CD8-positive, alpha-beta T cell (primary cell): ENCODE measurements at regions of chr6 and their contacts with region 1.

Region 1: GRCh38 chr6:90296346-90297114 is at the start of gene BACH2:
- DNase-seq: peak; percentile 87 to 97 (median 96)
- ATAC-seq: peak; percentile 74
- H3K4me3 ChIP-seq: peak within 1 kb of the TSS; percentile 69 to 71
- H3K4me3 Mint-ChIP-seq: peak within 1 kb of the TSS; percentile 94
- H3K27ac ChIP-seq: peak within 1 kb of the TSS; percentile 59 to 88
- H3K27ac Mint-ChIP-seq: peak within 1 kb of the TSS; percentile 94
- H3K4me1 ChIP-seq: peaks cover 27% of the 10 kb centered on the region
- H3K4me1 Mint-ChIP-seq: peaks cover 38% of the 10 kb centered on the region
- H3K27me3 ChIP-seq: no peaks in the 10 kb centered on the region
- H3K27me3 Mint-ChIP-seq: no peaks in the 10 kb centered on the region
- CTCF ChIP-seq: no peak
- total RNA-seq, gene BACH2: 162 to 164 TPM

Region 2: GRCh38 chr6:89829591-89830385 is 466.7 kb before region 1 on chr6 and contains the start of gene CASP8AP2:
- CTCF ChIA-PET with region 1: no interaction called
- POLR2A ChIA-PET with region 1: interaction called, 5 read pairs
- intact Hi-C with region 1: loop called (anchors 1 to 5 kb)
- DNase-seq: peak; percentile 88 to 99 (median 93)
- ATAC-seq: peak; percentile 94
- H3K4me3 ChIP-seq: peak within 1 kb of the TSS; percentile 82 to 95
- H3K4me3 Mint-ChIP-seq: peak within 1 kb of the TSS; percentile 99
- H3K27ac ChIP-seq: peak within 1 kb of the TSS; percentile 71 to 84
- H3K27ac Mint-ChIP-seq: peak within 1 kb of the TSS; percentile 97
- H3K4me1 ChIP-seq: peaks cover 14% of the 10 kb centered on the region
- H3K4me1 Mint-ChIP-seq: peaks cover 35% of the 10 kb centered on the region
- H3K27me3 ChIP-seq: no peaks in the 10 kb centered on the region
- H3K27me3 Mint-ChIP-seq: no peaks in the 10 kb centered on the region
- CTCF ChIP-seq: no peak
- total RNA-seq, gene CASP8AP2: 13.1 to 14.8 TPM

Region 3: DNA sequence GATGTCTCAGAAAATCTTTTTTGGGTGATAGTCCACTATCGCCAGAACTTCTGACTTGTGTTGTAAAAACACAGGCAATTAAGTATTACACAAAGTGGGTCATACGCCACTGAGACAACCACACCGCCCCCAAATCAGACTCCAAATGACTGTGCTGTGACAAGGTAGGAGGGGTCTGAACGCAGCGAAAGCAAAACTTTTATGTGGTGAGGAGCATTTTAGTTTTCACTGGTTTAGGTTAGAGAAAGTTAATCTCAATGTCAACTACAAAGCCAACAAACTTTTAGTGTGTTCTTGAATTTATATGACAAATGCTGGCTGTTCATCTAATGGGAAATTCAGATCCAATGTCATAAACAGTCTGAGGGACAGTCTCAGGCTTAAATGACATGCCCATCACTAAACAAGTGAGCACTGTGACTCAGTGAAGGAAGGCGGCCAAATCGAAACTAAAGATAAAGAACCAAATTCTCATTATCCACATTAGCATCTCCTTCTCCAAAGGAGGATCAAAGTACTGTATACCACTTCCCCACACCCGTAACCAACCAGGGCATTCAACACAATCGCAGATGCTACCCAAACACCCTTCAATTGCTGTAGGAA is 215.6 kb before region 1 on chr6:
- CTCF ChIA-PET with region 1: interaction called, 3 read pairs
- POLR2A ChIA-PET with region 1: interaction called, 6 read pairs
- intact Hi-C with region 1: loop called (anchors 1 to 5 kb)
- DNase-seq: peak; percentile 40 to 89 (median 68)
- ATAC-seq: peak; percentile 80
- H3K4me3 ChIP-seq: peak overlapping the region; percentile 54 to 66
- H3K4me3 Mint-ChIP-seq: peak overlapping the region; percentile 98
- H3K27ac ChIP-seq: peak overlapping the region; percentile 66 to 77
- H3K27ac Mint-ChIP-seq: peak overlapping the region; percentile 99
- H3K4me1 ChIP-seq: peaks cover 75% of the 10 kb centered on the region
- H3K4me1 Mint-ChIP-seq: peaks cover 89% of the 10 kb centered on the region
- H3K27me3 ChIP-seq: no peaks in the 10 kb centered on the region
- H3K27me3 Mint-ChIP-seq: no peaks in the 10 kb centered on the region
- CTCF ChIP-seq: no peak

Region 4: DNA sequence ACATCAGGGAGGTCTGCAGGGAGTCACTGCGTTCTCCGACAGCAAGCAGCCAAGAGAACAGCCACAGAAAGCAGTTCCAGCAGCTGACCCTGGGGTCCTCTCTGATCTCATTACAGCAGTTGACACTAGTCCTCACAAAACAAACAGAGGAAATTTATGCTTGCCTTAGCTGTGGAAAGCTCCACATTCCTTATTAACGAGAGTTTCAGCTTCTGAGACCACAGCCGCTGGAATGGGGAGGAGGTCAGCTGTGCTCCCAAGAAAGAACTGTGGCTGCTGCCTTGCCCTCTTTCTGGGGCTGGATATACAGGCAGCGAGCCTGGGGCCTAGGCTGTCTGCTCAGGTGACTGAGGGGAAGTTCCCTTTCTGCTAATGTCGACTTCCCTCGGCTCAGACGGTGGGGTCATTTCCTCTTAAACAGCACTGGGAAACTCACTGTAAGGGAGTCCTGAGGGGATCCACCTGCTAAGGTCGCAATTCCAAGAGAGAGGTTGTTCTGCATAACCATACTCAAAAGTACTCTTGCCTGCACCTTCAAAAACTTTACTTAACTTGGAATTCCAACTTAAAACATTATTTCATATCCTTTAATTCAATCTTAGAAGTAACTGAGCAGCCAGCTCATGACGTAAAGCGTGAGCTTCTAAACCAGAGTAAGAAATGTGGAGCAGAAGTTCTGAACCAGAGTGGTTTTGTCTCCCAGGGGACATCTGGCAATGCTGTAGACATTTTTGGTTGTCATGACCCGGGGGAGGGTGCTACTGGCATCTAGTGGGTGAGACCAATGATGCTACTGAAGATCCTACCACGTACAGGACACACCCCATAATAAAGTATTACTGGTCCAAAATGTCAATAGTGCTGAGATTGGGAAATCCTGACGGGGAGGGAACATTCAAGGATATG is 80.2 kb before region 1 on chr6:
- CTCF ChIA-PET with region 1: interaction called, 8 read pairs
- POLR2A ChIA-PET with region 1: interaction called, 13 read pairs
- intact Hi-C with region 1: loop called (anchors 2 kb)
- DNase-seq: peak in 7 of 9 experiments; percentile 21 to 84 (median 62)
- ATAC-seq: peak; percentile 29
- H3K4me3 ChIP-seq: peak overlapping the region in 1 of 2 experiments; percentile 16
- H3K4me3 Mint-ChIP-seq: peak overlapping the region; percentile 21
- H3K27ac ChIP-seq: peak overlapping the region; percentile 39 to 71
- H3K27ac Mint-ChIP-seq: no peak overlapping the region
- H3K4me1 ChIP-seq: peaks cover 100% of the 10 kb centered on the region
- H3K4me1 Mint-ChIP-seq: peaks cover 31% of the 10 kb centered on the region
- H3K27me3 ChIP-seq: no peaks in the 10 kb centered on the region
- H3K27me3 Mint-ChIP-seq: no peaks in the 10 kb centered on the region
- CTCF ChIP-seq: no peak

Region 5: DNA sequence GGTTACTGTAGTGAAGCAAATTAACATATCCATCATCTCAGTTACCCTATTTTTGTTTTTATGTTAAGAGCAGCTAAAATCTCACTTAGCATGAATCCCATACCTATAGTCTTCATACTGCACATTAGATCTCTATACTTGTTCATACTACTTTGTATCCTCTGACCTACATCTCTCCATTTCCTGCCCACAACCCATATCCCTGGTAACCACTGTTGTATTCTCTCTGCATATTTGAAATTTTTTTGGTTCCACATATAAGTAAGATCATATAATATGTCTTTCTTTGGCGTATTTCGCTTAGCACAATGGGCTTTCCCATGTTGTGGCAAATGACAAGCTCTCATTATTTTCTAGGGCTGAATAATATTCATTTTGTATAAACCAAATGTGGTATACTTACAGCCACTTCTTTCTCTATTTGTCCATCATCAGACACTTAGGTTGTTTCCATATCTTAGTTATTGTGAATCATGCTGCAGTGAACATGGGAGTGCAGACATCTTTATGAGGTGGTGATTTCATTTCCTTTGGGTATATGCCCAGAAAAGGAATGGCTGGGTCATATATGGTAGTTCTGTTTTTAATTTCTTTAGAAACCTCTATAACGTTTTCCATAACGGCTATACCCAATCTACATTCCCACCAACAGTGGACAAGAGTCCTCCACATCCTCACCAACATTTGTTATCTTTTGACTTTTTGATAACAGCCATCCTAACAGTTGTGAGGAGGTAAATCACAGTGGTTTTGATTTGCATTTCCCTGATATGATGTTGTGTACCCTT is 39.6 kb before region 1 on chr6:
- CTCF ChIA-PET with region 1: no interaction called
- POLR2A ChIA-PET with region 1: no interaction called
- intact Hi-C with region 1: loop called in 1 of 2 experiments (anchors 5 kb)
- DNase-seq: peak in 3 of 9 experiments; percentile 30 to 63 (median 45)
- ATAC-seq: peak; percentile 77
- H3K4me3 ChIP-seq: no peak overlapping the region
- H3K4me3 Mint-ChIP-seq: peak overlapping the region; percentile 1
- H3K27ac ChIP-seq: peak overlapping the region in 1 of 2 experiments; percentile 29
- H3K27ac Mint-ChIP-seq: peak overlapping the region; percentile 82
- H3K4me1 ChIP-seq: peaks cover 63% of the 10 kb centered on the region
- H3K4me1 Mint-ChIP-seq: peaks cover 84% of the 10 kb centered on the region
- H3K27me3 ChIP-seq: no peaks in the 10 kb centered on the region
- H3K27me3 Mint-ChIP-seq: no peaks in the 10 kb centered on the region
- CTCF ChIP-seq: no peak

Region 6: DNA sequence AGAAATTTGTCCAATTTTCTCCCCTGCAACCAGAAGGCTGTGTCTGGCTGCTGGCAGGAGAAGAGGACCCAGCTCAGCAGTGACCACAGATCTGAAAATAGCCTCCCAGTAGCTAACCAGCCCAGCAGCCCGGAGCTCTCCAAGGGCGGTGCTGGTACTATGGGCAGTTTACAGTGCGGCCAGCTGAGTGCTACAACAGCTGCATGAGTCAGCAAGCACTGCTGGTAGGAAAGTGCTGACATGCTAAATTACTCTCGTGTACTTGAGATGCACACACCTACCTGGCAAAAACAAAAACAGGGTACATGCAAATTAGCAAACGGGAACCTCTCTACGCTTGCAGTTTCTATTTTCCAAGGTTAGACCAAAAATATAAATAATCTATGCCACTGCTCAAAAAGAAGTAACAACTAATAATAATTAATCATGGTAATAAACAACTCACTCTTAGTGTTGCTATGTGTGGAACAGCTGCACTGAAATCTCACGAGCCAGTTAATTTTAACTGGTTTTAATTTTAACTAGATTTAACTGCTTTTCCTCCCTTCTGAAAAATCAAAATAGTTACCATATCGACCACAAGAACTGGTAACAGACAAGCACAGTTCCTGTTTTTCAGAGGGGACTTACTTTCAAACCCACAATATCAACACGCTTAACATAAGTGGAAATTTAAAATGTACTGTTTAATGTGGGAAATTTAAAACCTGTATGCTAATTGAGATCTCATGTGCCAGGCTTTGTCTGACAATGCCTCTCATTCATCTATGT is 10.7 kb before region 1 on chr6:
- CTCF ChIA-PET with region 1: interaction called, 12 read pairs
- POLR2A ChIA-PET with region 1: interaction called, 21 read pairs
- intact Hi-C with region 1: loop called in 1 of 2 experiments (anchors 1 kb)
- DNase-seq: peak in 5 of 9 experiments; percentile 46 to 77 (median 64)
- ATAC-seq: peak; percentile 46
- H3K4me3 ChIP-seq: peak overlapping the region; percentile 30 to 62
- H3K4me3 Mint-ChIP-seq: peak overlapping the region; percentile 83
- H3K27ac ChIP-seq: peak overlapping the region; percentile 1 to 74
- H3K27ac Mint-ChIP-seq: peak overlapping the region; percentile 93
- H3K4me1 ChIP-seq: peaks cover 93% of the 10 kb centered on the region
- H3K4me1 Mint-ChIP-seq: peaks cover 90% of the 10 kb centered on the region
- H3K27me3 ChIP-seq: no peaks in the 10 kb centered on the region
- H3K27me3 Mint-ChIP-seq: no peaks in the 10 kb centered on the region
- CTCF ChIP-seq: no peak

Region 7: DNA sequence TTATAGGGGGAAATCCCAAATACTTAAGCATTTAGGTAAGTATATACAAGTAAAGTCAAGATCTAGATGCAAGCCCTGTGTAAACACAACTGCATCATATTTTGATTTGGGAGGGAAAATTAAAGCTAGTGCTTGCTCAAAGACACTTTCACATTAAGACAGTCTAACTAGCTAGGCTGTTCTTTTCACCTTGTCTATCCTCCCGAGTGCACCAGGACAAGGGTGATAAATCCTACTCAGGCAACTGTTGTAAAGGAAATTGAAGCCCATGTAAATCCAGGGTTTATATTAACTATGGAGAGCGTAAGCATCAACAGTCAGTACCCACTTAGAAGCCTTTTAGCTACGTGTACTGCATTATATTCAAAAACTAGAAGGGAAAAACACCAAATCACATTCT is 19.5 kb after region 1 on chr6:
- CTCF ChIA-PET with region 1: no interaction called
- POLR2A ChIA-PET with region 1: no interaction called
- intact Hi-C with region 1: no loop called
- DNase-seq: no peak
- ATAC-seq: no peak
- H3K4me3 ChIP-seq: no peak overlapping the region
- H3K4me3 Mint-ChIP-seq: no peak overlapping the region
- H3K27ac ChIP-seq: no peak overlapping the region
- H3K27ac Mint-ChIP-seq: no peak overlapping the region
- H3K4me1 ChIP-seq: no peaks in the 10 kb centered on the region
- H3K4me1 Mint-ChIP-seq: peaks cover 4% of the 10 kb centered on the region
- H3K27me3 ChIP-seq: no peaks in the 10 kb centered on the region
- H3K27me3 Mint-ChIP-seq: no peaks in the 10 kb centered on the region
- CTCF ChIP-seq: no peak